ENCODE measurements at regions of chr19 and their contacts with region 1.

Region 1: GRCh38 chr19:10388957-10389356 is 8.6 kb upstream of the TYK2 start:
- DNase-seq: no peak
- H3K4me3 ChIP-seq: no peak overlapping the region
- CTCF ChIP-seq: peak; percentile 84

Region 2: GRCh38 chr19:10274589-10274988 is 114.4 kb before region 1 on chr19:
- CTCF ChIA-PET with region 1: interaction called, 1,180 read pairs
- POLR2A ChIA-PET with region 1: interaction called, 12 read pairs
- DNase-seq: no peak
- H3K4me3 ChIP-seq: no peak overlapping the region
- CTCF ChIP-seq: no peak

Region 3: DNA sequence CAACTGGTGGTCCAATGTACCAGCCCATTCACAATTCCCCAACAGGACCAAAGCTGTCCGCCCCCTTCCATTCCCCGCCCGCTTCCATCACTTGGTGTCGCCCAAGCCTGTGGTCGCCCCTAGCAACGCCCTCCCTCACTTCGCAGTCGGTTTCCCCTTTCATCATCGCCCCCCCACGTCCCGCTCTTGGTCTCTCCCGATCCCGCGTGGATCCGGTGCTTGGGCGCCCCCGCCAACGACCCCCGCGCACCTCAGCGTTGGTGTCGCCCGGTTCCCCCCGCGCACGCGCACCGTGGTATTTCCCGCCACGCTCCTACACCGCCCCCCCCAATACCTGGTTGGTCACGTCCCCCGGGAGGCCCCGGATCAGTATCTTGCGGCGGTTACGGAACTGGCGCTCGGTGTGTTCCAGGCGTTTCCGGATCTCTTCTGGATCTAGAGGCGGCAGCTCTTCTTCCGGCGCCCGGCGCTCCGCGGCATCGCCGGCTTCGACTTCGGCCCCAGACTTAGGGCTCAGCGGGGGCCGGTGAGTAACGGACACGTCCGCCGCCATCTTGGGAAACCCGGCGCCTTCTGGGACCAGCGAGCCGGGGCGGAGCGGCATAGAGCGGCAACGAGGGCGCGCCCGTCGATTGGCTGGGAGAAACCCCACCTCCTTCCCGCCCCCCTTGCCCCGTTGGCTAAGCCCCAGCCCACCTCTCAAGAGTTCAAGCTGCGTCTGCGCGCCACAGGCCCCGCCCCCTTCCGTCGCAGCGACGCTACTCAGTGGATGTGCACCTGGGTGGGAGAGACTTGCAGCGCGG is 55.8 kb before region 1 on chr19 and contains the start of gene RAVER1:
- CTCF ChIA-PET with region 1: interaction called, 12 read pairs
- POLR2A ChIA-PET with region 1: no interaction called
- DNase-seq: peak; percentile 67
- H3K4me3 ChIP-seq: peak within 1 kb of the TSS; percentile 87
- CTCF ChIP-seq: no peak